PC-9 (cell line): ENCODE measurements at regions of chr10 and their contacts with region 1.

Region 1: DNA sequence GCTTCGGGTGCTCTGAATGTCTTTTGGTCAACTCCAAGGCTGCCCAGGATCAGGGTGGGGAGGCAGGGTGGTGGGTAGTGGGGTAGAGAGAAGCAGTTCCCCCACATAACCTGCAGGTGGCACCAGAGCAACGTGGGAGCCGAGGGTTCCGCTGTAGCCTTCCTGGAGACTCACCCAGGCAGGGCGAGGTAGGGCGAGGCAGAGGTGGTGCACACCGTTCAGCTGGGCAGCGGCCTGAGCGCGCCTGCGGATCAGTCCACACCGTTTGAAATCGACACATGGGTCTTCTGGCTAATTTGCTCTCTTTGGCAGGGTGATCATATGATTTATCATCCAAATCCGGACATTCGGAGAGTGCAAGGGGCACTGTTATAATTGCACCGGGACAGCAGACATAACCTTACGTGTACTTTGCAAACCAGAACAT is 41.4 kb upstream of the MAP3K8 start:
- DNase-seq: peak in 1 of 2 experiments; percentile 72
- H3K4me3 ChIP-seq: no peak overlapping the region
- H3K27ac ChIP-seq: no peak overlapping the region
- H3K4me1 ChIP-seq: no peaks in the 10 kb centered on the region
- H3K27me3 ChIP-seq: no peaks in the 10 kb centered on the region
- CTCF ChIP-seq: peak; percentile 87

Region 2: GRCh38 chr10:30583778-30584415 is 191.3 kb after region 1 on chr10:
- CTCF ChIA-PET with region 1: no interaction called
- POLR2A ChIA-PET with region 1: no interaction called
- intact Hi-C with region 1: loop called (anchors 2 kb)
- DNase-seq: peak; percentile 74 to 83
- H3K4me3 ChIP-seq: peak overlapping the region; percentile 52; the same call in 1 of the 2 replicates
- H3K27ac ChIP-seq: peak overlapping the region; percentile 75
- H3K4me1 ChIP-seq: peaks cover 15% of the 10 kb centered on the region
- H3K27me3 ChIP-seq: no peaks in the 10 kb centered on the region
- CTCF ChIP-seq: no peak